Panc1 (cell line): ENCODE measurements at regions of chr7 and their contacts with region 1.

Region 1: GRCh38 chr7:149321978-149322541 is 60.1 kb downstream of the ZNF783 start:
- DNase-seq: no peak
- ATAC-seq: peak; percentile 77
- H3K4me3 ChIP-seq: peak overlapping the region; percentile 18 to 31; a peak in 3 of 4 replicates
- H3K27ac ChIP-seq: no peak overlapping the region
- H3K4me1 ChIP-seq: no peaks in the 10 kb centered on the region
- H3K27me3 ChIP-seq: no peaks in the 10 kb centered on the region; the same call in 1 of the 2 replicates
- CTCF ChIP-seq: no peak

Region 2: GRCh38 chr7:149381245-149381644 is 59.2 kb after region 1 on chr7:
- CTCF ChIA-PET with region 1: no interaction called
- POLR2A ChIA-PET with region 1: no interaction called
- in situ Hi-C with region 1: no loop called
- intact Hi-C with region 1: loop called (anchors 2 kb)
- DNase-seq: no peak
- ATAC-seq: peak; percentile 75; the same call in 1 of the 2 replicates
- H3K4me3 ChIP-seq: no peak overlapping the region
- H3K27ac ChIP-seq: no peak overlapping the region
- H3K4me1 ChIP-seq: no peaks in the 10 kb centered on the region
- H3K27me3 ChIP-seq: no peaks in the 10 kb centered on the region; the same call in 1 of the 2 replicates
- CTCF ChIP-seq: peak; percentile 31; the same call in 1 of the 2 replicates

Region 3: GRCh38 chr7:149398195-149398820 is 76.2 kb after region 1 on chr7:
- CTCF ChIA-PET with region 1: no interaction called
- POLR2A ChIA-PET with region 1: interaction called, 12 read pairs
- in situ Hi-C with region 1: no loop called
- intact Hi-C with region 1: no loop called
- DNase-seq: no peak
- ATAC-seq: 0 out of 2 replicates have a peak, but pooled peaks have one; percentile 26
- H3K4me3 ChIP-seq: no peak overlapping the region
- H3K27ac ChIP-seq: no peak overlapping the region
- H3K4me1 ChIP-seq: no peaks in the 10 kb centered on the region; the same call in 1 of the 2 replicates
- H3K27me3 ChIP-seq: no peaks in the 10 kb centered on the region
- CTCF ChIP-seq: no peak